MCF 10A (cell line): ENCODE measurements at regions of chr1 and their contacts with region 1.

Region 1: GRCh38 chr1:161314201-161314981 is at the start of gene SDHC:
- DNase-seq: peak; percentile 87
- H3K4me3 Mint-ChIP-seq: peak within 1 kb of the TSS; percentile 97
- H3K27ac Mint-ChIP-seq: peak within 1 kb of the TSS; percentile 100
- H3K4me1 Mint-ChIP-seq: peaks cover 13% of the 10 kb centered on the region
- H3K27me3 Mint-ChIP-seq: no peaks in the 10 kb centered on the region
- CTCF ChIP-seq: peak; percentile 35
- total RNA-seq, gene SDHC: 204 and 224 TPM in 2 replicates

Region 2: GRCh38 chr1:161330346-161330745 is 16.0 kb after region 1 on chr1:
- CTCF ChIA-PET with region 1: interaction called, 13 read pairs
- POLR2A ChIA-PET with region 1: interaction called, 15 read pairs
- intact Hi-C with region 1: no loop called
- DNase-seq: peak; percentile 75
- H3K4me3 Mint-ChIP-seq: no peak overlapping the region
- H3K27ac Mint-ChIP-seq: peak overlapping the region; percentile 41
- H3K4me1 Mint-ChIP-seq: peaks cover 10% of the 10 kb centered on the region
- H3K27me3 Mint-ChIP-seq: no peaks in the 10 kb centered on the region
- CTCF ChIP-seq: no peak

Region 3: DNA sequence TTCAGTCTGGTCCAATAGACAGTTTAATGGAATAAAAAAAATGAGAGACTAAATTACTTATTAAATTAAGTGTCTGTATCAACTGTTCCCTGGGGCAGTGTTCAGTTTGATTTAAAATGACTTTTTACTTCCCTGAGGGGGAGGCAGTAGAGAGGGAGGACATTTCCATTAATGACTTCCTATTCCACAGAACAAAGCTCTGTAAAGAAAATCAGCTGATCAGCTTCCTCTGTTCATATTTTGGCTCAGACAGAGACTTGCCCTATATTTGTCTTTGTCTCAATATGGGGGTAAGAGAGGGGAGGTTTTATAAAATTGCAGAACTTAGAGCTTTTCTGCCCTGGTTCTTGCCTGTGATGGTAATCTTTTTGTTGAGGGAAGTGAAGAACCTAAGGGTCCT is 44.9 kb after region 1 on chr1:
- CTCF ChIA-PET with region 1: interaction called, 6 read pairs
- POLR2A ChIA-PET with region 1: interaction called, 12 read pairs
- intact Hi-C with region 1: no loop called
- DNase-seq: no peak
- H3K4me3 Mint-ChIP-seq: no peak overlapping the region
- H3K27ac Mint-ChIP-seq: no peak overlapping the region
- H3K4me1 Mint-ChIP-seq: no peaks in the 10 kb centered on the region
- H3K27me3 Mint-ChIP-seq: no peaks in the 10 kb centered on the region
- CTCF ChIP-seq: no peak

Region 4: DNA sequence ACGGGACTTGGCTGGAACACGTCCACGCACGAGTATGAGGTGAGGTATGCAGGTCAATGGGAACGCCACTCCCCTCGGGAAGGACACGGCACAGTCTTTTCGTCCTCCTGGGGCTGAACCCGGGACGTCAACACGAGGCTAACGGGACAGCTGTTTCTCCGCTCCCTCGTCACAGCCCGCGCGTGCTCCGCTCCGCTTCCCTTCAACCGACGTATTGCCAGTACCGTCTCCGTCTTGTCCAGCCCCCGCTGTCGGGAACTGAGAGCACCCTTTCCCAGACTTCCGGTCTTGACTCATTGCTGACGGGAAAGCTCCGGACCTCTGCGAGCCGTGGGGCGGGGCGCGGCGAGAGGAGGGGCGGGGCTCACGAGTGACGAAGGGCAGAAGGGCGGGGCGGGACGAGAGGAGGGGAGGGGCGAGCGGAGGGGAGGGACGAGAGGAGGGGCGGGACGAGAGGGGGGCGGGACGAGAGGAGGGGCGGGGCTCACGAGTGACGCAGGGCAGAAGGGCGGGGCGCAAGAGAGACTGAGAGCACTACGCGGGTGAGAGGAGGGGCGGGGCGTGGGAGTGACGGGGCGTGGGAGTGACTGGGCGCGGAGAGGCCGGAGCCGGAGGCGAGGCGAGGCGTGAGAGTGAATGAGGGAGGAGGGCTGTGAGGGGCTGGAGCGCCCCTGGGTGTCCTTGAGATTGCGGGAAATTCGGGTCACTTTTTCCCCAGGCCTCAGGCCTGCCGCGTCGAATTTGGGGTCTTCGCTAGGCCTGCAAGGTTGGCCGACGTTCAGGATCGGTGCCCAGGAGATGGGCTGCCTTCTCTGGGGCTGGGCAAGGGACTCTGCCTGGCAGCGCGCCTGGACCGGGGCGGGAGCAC is 75.5 kb after region 1 on chr1:
- CTCF ChIA-PET with region 1: interaction called, 5 read pairs
- POLR2A ChIA-PET with region 1: interaction called, 24 read pairs
- intact Hi-C with region 1: no loop called
- DNase-seq: peak; percentile 100
- H3K4me3 Mint-ChIP-seq: peak overlapping the region; percentile 88
- H3K27ac Mint-ChIP-seq: peak overlapping the region; percentile 99
- H3K4me1 Mint-ChIP-seq: peaks cover 16% of the 10 kb centered on the region
- H3K27me3 Mint-ChIP-seq: no peaks in the 10 kb centered on the region
- CTCF ChIP-seq: no peak

Region 5: DNA sequence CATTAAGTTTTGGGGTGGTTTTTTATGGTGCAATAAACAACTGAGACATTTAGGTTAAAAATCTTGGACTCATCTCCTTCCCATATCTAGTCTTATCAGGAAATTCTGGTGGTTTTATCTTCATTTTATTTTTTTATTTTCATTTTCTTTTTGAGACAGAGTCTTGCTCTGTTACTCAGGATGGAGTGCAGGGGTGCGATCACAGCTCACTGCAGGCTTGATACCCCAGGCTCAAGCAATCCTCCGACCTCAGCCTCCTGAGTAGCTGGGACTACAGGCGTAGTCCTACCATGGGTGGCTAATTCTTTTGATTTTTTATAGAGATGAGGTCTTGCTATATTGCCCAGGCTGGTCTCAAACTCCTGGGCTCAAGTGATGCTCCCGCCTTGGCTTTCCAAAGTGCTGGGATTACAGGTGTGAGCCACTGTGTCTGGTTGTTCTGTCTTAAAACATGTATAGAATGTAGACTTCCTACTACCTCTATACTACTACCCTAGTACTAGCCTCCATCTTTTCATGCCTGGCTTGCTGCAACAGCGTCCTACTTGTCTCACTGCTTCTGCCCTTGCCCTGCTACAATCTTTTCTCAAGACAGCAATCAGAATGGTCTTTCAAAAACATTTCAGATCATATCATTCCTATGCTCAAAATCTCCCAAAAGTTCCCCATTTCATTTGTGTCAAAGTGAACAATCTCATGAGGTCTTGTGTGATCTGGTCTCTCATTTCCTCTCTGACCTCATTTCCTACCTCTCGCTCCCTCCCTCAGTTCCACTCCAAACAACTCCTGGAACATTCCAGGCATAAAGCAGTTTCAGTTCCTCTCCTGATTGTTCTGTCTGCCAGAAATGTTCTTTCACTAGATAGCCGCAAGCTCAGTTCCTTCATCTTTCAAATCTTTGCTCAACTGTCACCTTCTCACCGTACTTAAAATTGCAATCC is 185.0 kb after region 1 on chr1:
- CTCF ChIA-PET with region 1: no interaction called
- POLR2A ChIA-PET with region 1: no interaction called
- intact Hi-C with region 1: no loop called
- DNase-seq: no peak
- H3K4me3 Mint-ChIP-seq: no peak overlapping the region
- H3K27ac Mint-ChIP-seq: no peak overlapping the region
- H3K4me1 Mint-ChIP-seq: no peaks in the 10 kb centered on the region
- H3K27me3 Mint-ChIP-seq: peaks cover 33% of the 10 kb centered on the region
- CTCF ChIP-seq: no peak